ENCODE measurements at regions of chr1 and their contacts with region 1.

Region 1: GRCh38 chr1:184061396-184062003 is 10.0 kb downstream of the TSEN15 start:
- DNase-seq: no peak
- ATAC-seq: no peak
- H3K4me3 ChIP-seq: no peak overlapping the region
- H3K27ac ChIP-seq: no peak overlapping the region
- H3K4me1 ChIP-seq: peaks cover 12% of the 10 kb centered on the region
- H3K27me3 ChIP-seq: no peaks in the 10 kb centered on the region
- CTCF ChIP-seq: no peak

Region 2: GRCh38 chr1:183956559-183957188 is 104.8 kb before region 1 on chr1:
- CTCF ChIA-PET with region 1: no interaction called
- POLR2A ChIA-PET with region 1: no interaction called
- intact Hi-C with region 1: loop called (anchors 10 kb)
- DNase-seq: peak; percentile 64
- ATAC-seq: peak; percentile 87
- H3K4me3 ChIP-seq: no peak overlapping the region
- H3K27ac ChIP-seq: no peak overlapping the region; the same call in 1 of the 2 replicates
- H3K4me1 ChIP-seq: peaks cover 10% of the 10 kb centered on the region
- H3K27me3 ChIP-seq: no peaks in the 10 kb centered on the region
- CTCF ChIP-seq: peak; percentile 47; the same call in 1 of the 2 replicates